ENCODE measurements at regions of chr11 and their contacts with region 1.

Region 1: GRCh38 chr11:35662649-35663407 is at the start of gene TRIM44:
- DNase-seq: peak; percentile 90
- ATAC-seq: peak; percentile 96
- total RNA-seq, gene TRIM44: 39.9 TPM

Region 2: DNA sequence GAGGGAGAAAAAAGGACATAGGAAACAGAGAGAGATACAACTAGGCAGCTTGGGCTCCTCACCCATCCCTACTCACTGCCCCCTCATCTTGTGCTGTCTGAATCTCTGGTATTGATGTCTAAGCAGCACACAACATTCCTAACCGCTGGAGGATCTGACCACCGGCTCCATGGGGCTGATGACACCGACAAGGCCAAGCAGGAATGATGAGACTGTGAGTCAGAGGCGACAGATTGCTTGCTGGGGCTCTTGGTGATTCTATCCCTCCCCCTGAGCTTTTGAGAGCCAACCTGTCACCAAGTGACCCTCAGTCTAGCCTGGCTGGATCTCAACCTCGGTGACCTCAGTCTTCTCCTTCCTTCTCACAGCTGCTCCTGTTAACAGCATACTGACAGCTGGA is 151.2 kb before region 1 on chr11:
- intact Hi-C with region 1: no loop called
- DNase-seq: no peak
- ATAC-seq: no peak

Region 3: DNA sequence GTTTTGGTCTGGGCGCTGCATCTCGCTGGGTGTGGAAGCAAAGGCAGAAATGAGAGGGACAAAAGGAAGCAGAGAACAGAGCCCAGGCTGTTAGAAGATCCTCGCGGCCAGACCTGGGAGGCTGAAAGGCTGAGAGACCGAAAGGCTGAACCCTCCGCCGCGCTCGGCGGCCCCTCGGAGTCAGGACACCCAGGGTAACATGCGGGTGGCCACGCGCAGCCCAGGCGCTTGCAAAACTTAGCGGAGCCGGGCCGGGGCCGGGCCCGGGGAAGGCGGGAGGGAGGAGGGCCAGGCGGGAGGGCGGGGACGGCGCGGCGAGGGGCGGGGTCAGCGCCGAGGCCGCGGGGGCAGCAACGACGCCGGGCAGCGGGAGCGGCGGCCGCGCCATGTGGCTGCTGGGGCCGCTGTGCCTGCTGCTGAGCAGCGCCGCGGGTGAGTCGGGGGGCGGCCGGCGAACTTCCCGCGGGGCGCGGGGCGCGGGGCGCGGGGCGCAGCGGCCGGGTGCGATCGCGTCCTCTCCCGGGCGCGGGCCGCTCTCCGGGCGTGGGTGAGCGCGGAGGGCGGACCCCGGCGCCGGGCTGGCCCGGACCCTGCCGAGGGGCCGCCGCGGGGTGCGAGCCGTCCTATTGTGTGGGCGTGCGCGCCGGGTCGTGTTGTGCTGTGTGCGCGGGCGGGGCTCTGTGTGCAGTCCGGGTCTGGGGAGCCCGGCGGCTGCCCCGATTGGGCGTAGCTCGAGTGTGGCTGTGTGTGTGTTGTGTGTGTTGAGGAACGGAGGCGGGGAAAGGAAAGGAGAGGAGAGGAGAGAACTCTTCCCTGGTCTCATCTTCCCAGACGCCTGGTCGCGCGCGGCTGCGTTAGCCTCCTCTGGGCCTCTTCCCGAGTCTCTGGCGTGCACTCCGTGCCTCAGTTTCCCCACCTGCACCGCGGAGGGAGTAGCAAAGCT is 281.2 kb after region 1 on chr11 and contains the start of gene LDLRAD3:
- intact Hi-C with region 1: loop called (anchors 5 kb)
- DNase-seq: peak; percentile 90
- ATAC-seq: peak; percentile 95
- total RNA-seq, gene LDLRAD3: 1.7 TPM

Measured in Right ventricle myocardium inferior (tissue), 1 donor.